Colonic mucosa (tissue), 4 donors: ENCODE measurements at regions of chr11 and their contacts with region 1.

Region 1: DNA sequence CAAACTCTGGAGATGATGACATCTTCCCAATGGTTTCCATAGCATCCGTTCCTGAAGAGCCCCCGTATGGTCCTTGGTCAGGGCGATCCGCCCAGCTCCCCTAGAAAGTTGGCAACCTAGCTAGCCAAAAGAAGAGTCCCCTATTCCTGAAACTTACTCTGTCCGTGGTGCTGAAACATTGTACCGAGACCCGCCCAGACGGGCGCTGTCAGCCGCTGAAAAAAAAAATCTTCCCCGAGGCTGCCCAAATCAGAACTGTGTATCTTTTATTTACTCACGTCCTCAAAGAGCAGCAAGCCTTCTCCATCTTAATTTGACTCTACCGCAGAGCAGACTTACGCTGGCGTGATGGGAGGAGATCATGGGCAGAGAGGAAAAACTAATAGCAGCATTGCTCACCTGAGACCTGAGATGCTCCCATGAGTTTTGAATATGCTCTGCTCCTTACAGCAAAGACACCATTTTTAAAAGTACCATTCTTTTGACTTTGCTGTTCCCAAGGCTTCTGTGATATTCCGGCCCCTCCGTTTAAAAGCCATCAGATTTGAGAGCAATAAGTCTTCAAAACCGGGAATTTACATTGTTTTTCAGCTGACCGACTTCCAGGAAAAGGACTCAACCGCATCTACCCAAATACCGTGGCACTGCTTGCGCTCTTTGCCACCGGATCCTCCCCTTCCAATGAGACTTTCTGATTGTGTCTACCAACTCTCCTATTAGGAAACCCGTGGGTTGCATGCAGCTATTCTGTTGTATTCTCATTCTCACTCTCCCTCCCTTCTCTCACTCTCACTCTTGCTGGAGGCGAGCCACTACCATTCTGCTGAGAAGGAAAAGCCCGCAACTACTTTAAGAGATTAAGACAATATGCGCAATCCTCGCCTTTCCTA is at the start of gene SLC17A6:
- DNase-seq: no peak
- H3K4me3 ChIP-seq: no peak within 1 kb of the TSS
- H3K27ac ChIP-seq: no peak within 1 kb of the TSS
- H3K4me1 ChIP-seq: no peaks in the 10 kb centered on the region
- H3K27me3 ChIP-seq: peaks cover 40% of the 10 kb centered on the region
- CTCF ChIP-seq: no peak
- total RNA-seq, gene SLC17A6: not detected

Region 2: DNA sequence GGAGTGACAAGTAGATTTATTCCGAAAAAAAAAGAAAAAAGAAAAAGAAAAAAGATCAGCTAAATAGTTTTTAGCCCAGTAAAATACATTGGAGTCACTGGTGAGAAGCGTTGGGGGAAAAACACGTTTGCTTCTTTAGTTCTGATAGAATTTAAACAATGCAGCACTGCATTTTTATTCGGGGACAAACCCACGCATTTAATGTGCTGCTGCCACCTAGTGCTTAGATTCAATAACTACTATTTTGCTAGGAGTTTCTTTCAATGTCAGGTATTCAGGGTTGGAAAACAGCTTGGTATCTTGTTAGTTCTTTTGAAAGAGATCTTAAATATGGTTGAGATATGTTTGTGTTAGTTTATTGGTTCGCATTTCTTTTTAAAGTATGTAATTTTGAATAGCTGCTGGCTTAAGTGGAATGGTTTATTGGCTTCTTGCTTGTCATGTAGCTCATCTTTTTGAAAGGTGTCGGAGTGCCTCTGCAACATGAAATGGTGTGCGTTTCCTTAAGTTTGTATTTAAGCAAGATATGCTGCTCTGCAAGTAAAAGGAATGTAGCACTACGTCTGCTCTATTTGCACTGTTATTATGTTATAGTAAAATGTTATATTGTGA is 449.8 kb after region 1 on chr11:
- intact Hi-C with region 1: loop called (anchors 2 kb)
- DNase-seq: no peak
- H3K4me3 ChIP-seq: no peak overlapping the region
- H3K27ac ChIP-seq: no peak overlapping the region
- H3K4me1 ChIP-seq: no peaks in the 10 kb centered on the region
- H3K27me3 ChIP-seq: no peaks in the 10 kb centered on the region
- CTCF ChIP-seq: peak; percentile 59